Vagina (tissue), 2 donors: ENCODE measurements at regions of chr6 and their contacts with region 1.

Region 1: GRCh38 chr6:139988685-139989084 is 614.2 kb upstream of the CITED2 start:
- DNase-seq: no peak
- H3K4me3 ChIP-seq: no peak overlapping the region
- H3K27ac ChIP-seq: no peak overlapping the region
- H3K4me1 ChIP-seq: peaks cover 1% of the 10 kb centered on the region
- H3K27me3 ChIP-seq: no peaks in the 10 kb centered on the region
- CTCF ChIP-seq: no peak
- POLR2A ChIP-seq: no peak

Region 2: DNA sequence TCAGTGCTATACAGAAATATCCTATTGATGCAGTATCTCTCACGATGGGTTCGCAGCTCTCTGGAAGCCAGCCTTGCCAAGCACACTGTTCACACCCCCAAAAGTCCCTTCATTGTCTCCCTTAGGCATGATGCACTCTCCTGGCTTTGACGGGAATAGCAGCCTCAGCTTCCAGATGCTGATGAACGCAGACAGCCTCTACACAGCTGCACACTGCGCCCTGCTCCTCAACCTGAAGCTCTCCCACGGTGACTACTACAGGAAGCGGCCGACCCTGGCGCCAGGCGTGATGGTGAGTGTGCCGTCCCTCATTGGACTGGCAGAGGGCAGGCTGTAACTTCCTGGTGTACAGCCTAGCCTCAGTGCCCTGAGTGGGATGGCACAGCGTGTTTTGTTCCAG is 1710.4 kb before region 1 on chr6:
- intact Hi-C with region 1: loop called (anchors 5 kb)
- DNase-seq: no peak
- H3K4me3 ChIP-seq: no peak overlapping the region
- H3K27ac ChIP-seq: no peak overlapping the region
- H3K4me1 ChIP-seq: no peaks in the 10 kb centered on the region
- H3K27me3 ChIP-seq: no peaks in the 10 kb centered on the region
- CTCF ChIP-seq: no peak
- POLR2A ChIP-seq: no peak

Region 3: DNA sequence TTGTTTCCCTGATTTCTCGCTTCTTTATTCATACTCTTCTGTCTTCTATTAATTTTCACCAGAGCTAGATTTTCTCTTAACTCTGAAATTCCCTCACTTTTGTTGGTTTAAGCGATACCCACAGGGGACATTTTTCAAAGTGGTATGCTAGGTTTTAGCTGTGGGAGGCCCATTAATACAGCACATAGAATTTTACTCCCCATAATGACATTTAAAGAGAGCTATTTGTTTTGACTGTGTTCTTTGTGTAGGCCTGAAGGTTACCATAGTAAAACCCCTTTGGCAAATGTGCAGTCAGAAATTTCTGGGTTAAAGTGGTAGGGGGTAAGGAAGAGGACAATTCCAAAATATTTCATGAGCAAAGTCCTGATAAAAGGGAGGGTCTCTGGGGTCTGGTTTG is 106.8 kb after region 1 on chr6:
- intact Hi-C with region 1: no loop called
- DNase-seq: no peak
- H3K4me3 ChIP-seq: no peak overlapping the region
- H3K27ac ChIP-seq: no peak overlapping the region
- H3K4me1 ChIP-seq: no peaks in the 10 kb centered on the region
- H3K27me3 ChIP-seq: no peaks in the 10 kb centered on the region
- CTCF ChIP-seq: no peak
- POLR2A ChIP-seq: no peak